SK-N-SH (cell line): ENCODE measurements at regions of chr12 and their contacts with region 1.

Region 1: DNA sequence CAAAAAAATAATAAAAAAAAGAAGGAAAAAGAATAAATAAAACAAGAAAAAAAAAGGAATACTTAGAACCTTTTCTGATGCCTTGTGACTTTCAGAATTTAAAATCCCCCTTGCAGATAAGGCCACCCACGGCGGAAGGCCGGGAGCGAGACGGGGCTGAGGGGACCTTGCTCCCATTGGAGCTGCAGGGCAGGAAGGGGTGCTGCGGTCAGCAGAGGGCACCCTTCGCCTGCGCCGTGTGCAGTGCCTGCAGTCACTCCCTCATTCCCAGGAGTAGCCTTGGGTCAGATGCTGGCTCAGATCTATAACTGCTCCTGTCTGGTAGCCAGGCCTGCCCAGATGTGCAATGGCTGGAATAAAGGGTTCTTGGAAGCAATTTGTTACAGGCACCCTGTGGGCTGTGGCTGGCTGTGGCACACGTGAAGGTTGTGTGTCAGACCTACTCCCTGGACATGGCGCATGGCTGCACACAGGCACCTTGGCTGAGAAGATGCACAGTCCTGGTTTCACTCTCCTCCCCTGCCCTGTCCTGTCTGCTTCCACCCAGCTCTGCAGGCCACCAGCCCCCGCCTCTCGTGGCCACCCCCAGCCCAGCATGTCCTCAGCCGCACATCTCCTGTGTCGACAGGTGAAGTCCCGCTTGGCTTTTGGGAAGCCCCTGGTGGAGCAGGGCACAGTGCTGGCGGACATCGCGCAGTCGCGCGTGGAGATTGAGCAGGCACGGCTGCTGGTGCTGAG is 13.4 kb upstream of the ALDH2 start:
- DNase-seq: peak; percentile 95
- H3K4me3 ChIP-seq: no peak overlapping the region; a peak in 1 of 4 replicates
- H3K27ac ChIP-seq: peak overlapping the region in 1 of 2 experiments; percentile 48; a peak in 2 of 4 replicates
- H3K4me1 ChIP-seq: peaks cover 0 to 37% of the 10 kb centered on the region in 2 experiments; a peak in 1 of 4 replicates
- H3K27me3 ChIP-seq: no peaks in the 10 kb centered on the region
- CTCF ChIP-seq: peak; percentile 66
- EP300 ChIP-seq: no peak
- RAD21 ChIP-seq: peak; percentile 92

Region 2: DNA sequence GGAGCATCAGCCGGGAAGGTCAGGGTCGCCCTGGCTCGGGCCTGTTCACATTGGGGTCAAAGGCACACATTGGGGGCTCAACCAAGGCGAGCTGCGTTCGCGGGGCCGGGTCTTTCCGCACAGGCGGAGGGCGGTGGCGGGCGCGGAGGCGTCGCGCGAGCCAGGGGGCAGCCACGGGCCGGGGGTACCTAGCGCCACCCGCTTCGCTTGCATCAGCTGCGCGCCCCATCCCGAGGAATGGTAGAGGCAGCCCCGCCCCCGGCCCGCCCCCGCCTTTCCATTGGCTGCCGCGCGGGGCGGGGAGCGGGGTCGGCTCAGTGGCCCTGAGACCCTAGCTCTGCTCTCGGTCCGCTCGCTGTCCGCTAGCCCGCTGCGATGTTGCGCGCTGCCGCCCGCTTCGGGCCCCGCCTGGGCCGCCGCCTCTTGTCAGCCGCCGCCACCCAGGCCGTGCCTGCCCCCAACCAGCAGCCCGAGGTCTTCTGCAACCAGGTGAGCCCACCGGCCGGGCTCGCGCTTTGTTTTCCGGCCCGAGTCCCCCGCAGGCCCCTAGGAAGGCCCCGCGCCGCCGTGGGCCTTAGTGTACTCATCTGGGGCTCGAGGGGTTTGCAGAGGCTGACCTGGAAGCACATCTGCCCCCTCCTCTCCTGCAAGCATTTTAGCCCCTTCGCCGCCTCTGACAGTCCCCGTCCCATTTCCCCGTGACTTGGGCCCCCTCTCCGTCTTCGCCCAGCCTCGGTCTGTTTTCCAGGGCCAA is 13.5 kb after region 1 on chr12 and contains the start of gene ALDH2:
- CTCF ChIA-PET with region 1: interaction called, 21 read pairs
- POLR2A ChIA-PET with region 1: interaction called, 5 read pairs
- DNase-seq: peak; percentile 99
- H3K4me3 ChIP-seq: peak within 1 kb of the TSS; percentile 66 to 78
- H3K27ac ChIP-seq: peak within 1 kb of the TSS; percentile 19 to 28; a peak in 2 of 4 replicates
- H3K4me1 ChIP-seq: peaks cover 0 to 11% of the 10 kb centered on the region in 2 experiments; a peak in 1 of 4 replicates
- H3K27me3 ChIP-seq: no peaks in the 10 kb centered on the region
- CTCF ChIP-seq: no peak
- EP300 ChIP-seq: no peak
- RAD21 ChIP-seq: no peak
- polyA plus RNA-seq, gene ALDH2: 60.4 and 67.5 TPM in 2 replicates

Region 3: DNA sequence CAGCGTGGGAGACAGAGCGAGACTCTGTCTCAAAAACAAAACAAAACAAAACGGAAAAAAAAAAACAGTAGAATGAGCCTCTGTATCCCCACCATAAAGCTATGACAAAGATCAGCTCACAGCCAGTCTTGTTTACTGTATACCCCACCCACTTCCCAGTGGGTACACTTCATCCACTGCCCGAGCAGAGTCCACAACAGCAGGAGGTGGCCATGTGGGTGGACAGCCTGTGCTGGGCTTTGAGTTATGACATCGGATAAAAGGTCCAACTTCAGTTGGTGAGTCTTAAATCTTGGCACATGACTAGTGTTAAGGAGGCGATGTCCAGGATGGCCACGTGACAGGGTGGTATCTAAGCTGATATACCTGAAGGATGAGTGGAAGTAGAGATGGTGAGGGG is 53.9 kb after region 1 on chr12:
- CTCF ChIA-PET with region 1: interaction called, 101 read pairs
- POLR2A ChIA-PET with region 1: no interaction called
- DNase-seq: no peak
- H3K4me3 ChIP-seq: no peak overlapping the region
- H3K27ac ChIP-seq: no peak overlapping the region
- H3K4me1 ChIP-seq: no peaks in the 10 kb centered on the region
- H3K27me3 ChIP-seq: no peaks in the 10 kb centered on the region
- CTCF ChIP-seq: no peak
- EP300 ChIP-seq: no peak
- RAD21 ChIP-seq: no peak

Region 4: DNA sequence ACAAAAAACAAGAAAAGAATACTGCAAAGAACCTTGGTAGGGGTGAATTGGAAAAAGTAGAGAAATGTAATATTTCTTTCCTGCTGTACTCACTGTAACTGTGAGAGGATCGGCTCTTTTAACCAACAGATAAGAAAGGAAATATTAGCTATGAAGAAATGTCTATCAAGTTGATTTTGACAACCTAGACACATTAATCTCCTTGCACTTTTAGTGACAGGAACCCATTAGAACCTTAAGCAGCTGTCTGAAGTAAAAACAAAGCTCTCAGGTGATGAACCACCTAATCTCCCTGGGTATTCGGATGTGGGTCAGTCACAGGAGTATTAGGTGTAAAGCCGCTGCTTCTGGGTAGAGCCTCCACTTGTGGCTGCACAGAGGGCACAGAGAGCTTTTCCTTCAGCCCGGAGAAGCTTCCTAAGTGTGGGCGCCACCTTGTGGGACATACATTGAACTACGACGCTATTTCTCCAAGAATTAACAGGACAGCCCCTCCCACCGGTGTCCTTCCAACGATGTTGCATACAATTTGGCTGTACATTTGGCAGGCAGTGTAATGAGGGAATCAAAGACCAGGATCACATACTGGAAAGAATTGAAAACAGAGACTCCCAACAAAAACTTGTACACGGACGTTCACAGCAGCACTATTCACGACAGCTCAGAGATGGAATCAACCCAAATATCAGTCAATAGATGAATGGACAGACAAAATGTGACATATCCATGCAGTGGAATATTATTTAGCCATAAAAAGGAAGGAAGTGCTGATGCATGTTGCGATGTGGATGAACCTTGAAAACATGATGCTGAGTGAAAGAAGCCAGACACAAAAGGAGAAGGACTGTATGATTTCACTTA is 59.8 kb after region 1 on chr12:
- CTCF ChIA-PET with region 1: interaction called, 101 read pairs
- POLR2A ChIA-PET with region 1: interaction called, 4 read pairs
- DNase-seq: peak; percentile 85
- H3K4me3 ChIP-seq: no peak overlapping the region
- H3K27ac ChIP-seq: no peak overlapping the region
- H3K4me1 ChIP-seq: no peaks in the 10 kb centered on the region
- H3K27me3 ChIP-seq: no peaks in the 10 kb centered on the region
- CTCF ChIP-seq: peak; percentile 78
- EP300 ChIP-seq: no peak
- RAD21 ChIP-seq: peak; percentile 84

Region 5: GRCh38 chr12:111841750-111842555 is 88.6 kb after region 1 on chr12 and contains the start of gene MAPKAPK5:
- CTCF ChIA-PET with region 1: interaction called, 13 read pairs
- POLR2A ChIA-PET with region 1: no interaction called
- DNase-seq: peak; percentile 98
- H3K4me3 ChIP-seq: peak within 1 kb of the TSS; percentile 77 to 82
- H3K27ac ChIP-seq: peak within 1 kb of the TSS; percentile 84 to 89
- H3K4me1 ChIP-seq: peaks cover 12 to 15% of the 10 kb centered on the region in 2 experiments; a peak in 2 of 4 replicates
- H3K27me3 ChIP-seq: no peaks in the 10 kb centered on the region
- CTCF ChIP-seq: no peak
- EP300 ChIP-seq: no peak; a peak in 1 of 4 replicates
- RAD21 ChIP-seq: no peak
- polyA plus RNA-seq, gene MAPKAPK5: 38.1 and 45.0 TPM in 2 replicates